ENCODE measurements at regions of chr19 and their contacts with region 1.

Region 1: GRCh38 chr19:17605761-17606745 is 50.6 kb downstream of the COLGALT1 start:
- DNase-seq: peak; percentile 61 to 94 (median 80)
- ATAC-seq: peak; percentile 98
- H3K4me3 ChIP-seq: peak overlapping the region; percentile 27 to 69
- H3K4me3 Mint-ChIP-seq: peak overlapping the region; percentile 80
- H3K27ac ChIP-seq: peak overlapping the region in 1 of 2 experiments; percentile 51
- H3K27ac Mint-ChIP-seq: no peak overlapping the region
- H3K4me1 ChIP-seq: peaks cover 10% of the 10 kb centered on the region
- H3K4me1 Mint-ChIP-seq: peaks cover 8% of the 10 kb centered on the region
- H3K27me3 ChIP-seq: peaks cover 6 to 7% of the 10 kb centered on the region in 2 experiments
- H3K27me3 Mint-ChIP-seq: peaks cover 32% of the 10 kb centered on the region
- CTCF ChIP-seq: peak; percentile 75

Region 2: DNA sequence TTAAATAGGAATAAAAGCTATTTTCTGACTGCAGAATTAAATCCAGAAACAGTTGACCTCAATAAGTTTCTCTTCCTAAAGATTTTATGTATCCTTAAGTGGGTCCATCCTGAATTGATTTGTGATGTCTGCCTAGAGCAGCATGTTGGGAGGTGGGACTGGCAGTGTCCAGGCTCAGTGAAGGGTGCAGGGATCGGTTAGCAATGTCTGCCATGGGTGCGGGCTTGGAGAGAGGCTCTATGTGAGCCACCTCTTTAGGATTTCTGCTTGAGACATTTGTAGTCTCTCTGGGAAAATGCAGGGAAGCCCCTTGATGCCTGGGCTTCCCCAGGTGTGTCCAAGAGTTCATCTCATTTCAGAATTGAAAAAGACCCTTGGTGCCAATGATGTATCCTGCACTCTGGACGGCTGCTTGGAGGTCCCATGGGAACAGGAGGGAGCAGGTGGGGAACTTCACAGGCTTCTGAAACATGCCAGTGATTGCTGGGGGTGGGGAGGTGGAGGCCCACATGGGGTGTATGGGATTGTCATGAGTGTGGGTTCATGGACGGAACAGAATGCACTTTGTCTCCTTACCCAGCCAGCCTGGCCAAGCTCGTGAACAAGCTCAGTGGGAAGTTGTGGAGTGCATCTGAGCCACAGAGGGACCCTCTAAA is 56.8 kb before region 1 on chr19:
- CTCF ChIA-PET with region 1: no interaction called
- POLR2A ChIA-PET with region 1: no interaction called
- intact Hi-C with region 1: no loop called
- DNase-seq: no peak
- ATAC-seq: no peak
- H3K4me3 ChIP-seq: no peak overlapping the region
- H3K4me3 Mint-ChIP-seq: no peak overlapping the region
- H3K27ac ChIP-seq: no peak overlapping the region
- H3K27ac Mint-ChIP-seq: no peak overlapping the region
- H3K4me1 ChIP-seq: no peaks in the 10 kb centered on the region
- H3K4me1 Mint-ChIP-seq: no peaks in the 10 kb centered on the region
- H3K27me3 ChIP-seq: no peaks in the 10 kb centered on the region
- H3K27me3 Mint-ChIP-seq: no peaks in the 10 kb centered on the region
- CTCF ChIP-seq: no peak

Region 3: DNA sequence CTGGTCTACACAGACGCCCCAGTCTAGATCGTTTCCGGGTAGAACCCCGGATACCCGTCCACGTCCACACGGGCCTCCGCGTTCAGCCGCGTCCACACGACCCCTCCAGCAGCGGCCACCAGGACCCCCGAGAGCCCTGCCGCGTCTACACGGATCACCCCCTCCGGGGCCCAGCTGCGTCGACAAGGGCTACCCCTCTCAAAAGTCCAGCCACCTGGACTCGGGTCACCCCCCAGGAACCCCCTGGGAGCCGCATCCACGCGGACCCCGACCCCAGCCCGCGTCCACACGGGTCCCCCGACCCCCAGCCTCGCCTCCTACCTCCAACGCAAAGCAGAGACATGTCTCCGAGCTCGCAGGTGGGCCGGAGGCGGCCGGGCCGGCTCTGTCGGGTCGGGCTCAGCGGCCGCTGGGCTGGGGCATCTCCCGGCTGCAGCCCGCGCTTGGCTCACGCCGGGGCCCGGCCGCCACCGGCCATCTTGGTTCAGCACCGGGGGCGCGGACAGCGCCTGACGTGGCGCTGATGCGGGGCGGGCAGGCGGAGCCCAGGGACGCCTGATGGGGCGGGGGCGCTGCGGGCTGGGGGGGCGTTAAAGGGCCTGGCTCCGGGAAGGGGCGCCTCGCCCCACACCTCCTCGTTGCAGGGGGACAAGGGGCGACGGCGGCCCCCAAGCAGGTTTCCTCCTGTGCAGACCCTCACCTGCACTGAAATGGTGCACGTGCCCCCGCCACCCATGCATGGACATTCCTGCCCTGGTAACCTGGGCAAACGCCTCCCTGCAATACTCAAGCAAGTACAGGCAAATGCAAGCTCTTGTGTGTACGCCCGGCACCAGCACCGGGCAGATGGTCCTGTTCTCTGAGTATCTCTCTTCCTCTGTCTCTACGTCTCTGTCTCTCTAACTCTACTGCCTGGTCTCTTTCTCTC is 82.1 kb after region 1 on chr19 and contains the start of gene UNC13A:
- CTCF ChIA-PET with region 1: no interaction called
- POLR2A ChIA-PET with region 1: no interaction called
- intact Hi-C with region 1: loop called in 1 of 2 experiments (anchors 5 kb)
- DNase-seq: peak; percentile 1 to 63 (median 52)
- ATAC-seq: peak; percentile 93
- H3K4me3 ChIP-seq: no peak within 1 kb of the TSS
- H3K4me3 Mint-ChIP-seq: no peak within 1 kb of the TSS
- H3K27ac ChIP-seq: no peak within 1 kb of the TSS
- H3K27ac Mint-ChIP-seq: no peak within 1 kb of the TSS
- H3K4me1 ChIP-seq: peaks cover 15% of the 10 kb centered on the region
- H3K4me1 Mint-ChIP-seq: peaks cover 13% of the 10 kb centered on the region
- H3K27me3 ChIP-seq: peaks cover 21 to 40% of the 10 kb centered on the region in 2 experiments
- H3K27me3 Mint-ChIP-seq: peaks cover 65% of the 10 kb centered on the region
- CTCF ChIP-seq: no peak
- total RNA-seq, gene UNC13A: 0.03 to 0.06 TPM

Region 4: DNA sequence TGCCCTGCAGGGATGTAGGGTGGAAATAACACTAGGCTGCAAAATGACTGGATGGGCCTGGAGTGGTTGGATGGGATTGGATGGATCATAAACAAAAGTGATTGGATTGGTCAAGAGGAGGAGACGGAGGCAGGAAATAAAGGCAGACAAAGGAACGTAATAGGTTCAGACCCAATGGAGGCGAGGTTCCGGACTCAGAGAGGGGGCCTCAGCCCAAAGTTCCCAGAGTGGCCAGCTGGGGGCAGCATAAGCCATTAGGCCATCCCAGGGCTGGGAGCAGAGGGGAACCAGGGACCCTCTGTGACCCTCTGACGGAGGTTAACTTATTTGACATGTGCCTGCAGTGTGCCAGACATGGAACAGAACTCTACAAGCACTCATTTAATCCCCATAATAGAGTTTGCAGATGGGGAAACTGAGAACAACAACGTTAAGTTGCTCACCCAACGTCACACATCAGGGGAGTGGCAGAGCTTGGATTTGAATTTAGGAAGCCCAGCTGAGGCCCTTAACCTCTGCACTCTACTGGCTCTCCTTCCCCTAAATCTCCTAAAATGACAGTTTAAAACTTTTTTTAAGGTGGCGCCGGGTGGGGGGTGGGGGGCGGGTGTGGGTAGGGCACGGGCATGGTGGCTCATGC is 97.9 kb after region 1 on chr19:
- CTCF ChIA-PET with region 1: no interaction called
- POLR2A ChIA-PET with region 1: no interaction called
- intact Hi-C with region 1: no loop called
- DNase-seq: peak; percentile 52 to 83 (median 73)
- ATAC-seq: peak; percentile 99
- H3K4me3 ChIP-seq: no peak overlapping the region
- H3K4me3 Mint-ChIP-seq: no peak overlapping the region
- H3K27ac ChIP-seq: no peak overlapping the region
- H3K27ac Mint-ChIP-seq: no peak overlapping the region
- H3K4me1 ChIP-seq: no peaks in the 10 kb centered on the region
- H3K4me1 Mint-ChIP-seq: no peaks in the 10 kb centered on the region
- H3K27me3 ChIP-seq: no peaks in the 10 kb centered on the region
- H3K27me3 Mint-ChIP-seq: peaks cover 9% of the 10 kb centered on the region
- CTCF ChIP-seq: peak; percentile 89

Region 5: GRCh38 chr19:17784201-17785008 is 178.4 kb after region 1 on chr19:
- CTCF ChIA-PET with region 1: interaction called, 4 read pairs
- POLR2A ChIA-PET with region 1: no interaction called
- intact Hi-C with region 1: loop called in 1 of 2 experiments (anchors 1 kb)
- DNase-seq: peak; percentile 55 to 81 (median 74)
- ATAC-seq: peak; percentile 94
- H3K4me3 ChIP-seq: no peak overlapping the region
- H3K4me3 Mint-ChIP-seq: no peak overlapping the region
- H3K27ac ChIP-seq: no peak overlapping the region
- H3K27ac Mint-ChIP-seq: no peak overlapping the region
- H3K4me1 ChIP-seq: peaks cover 4% of the 10 kb centered on the region
- H3K4me1 Mint-ChIP-seq: peaks cover 11% of the 10 kb centered on the region
- H3K27me3 ChIP-seq: no peaks in the 10 kb centered on the region
- H3K27me3 Mint-ChIP-seq: no peaks in the 10 kb centered on the region
- CTCF ChIP-seq: peak; percentile 82